CD4-positive, alpha-beta memory T cell (primary cell): ENCODE measurements at regions of chr2 and their contacts with region 1.

Region 1: DNA sequence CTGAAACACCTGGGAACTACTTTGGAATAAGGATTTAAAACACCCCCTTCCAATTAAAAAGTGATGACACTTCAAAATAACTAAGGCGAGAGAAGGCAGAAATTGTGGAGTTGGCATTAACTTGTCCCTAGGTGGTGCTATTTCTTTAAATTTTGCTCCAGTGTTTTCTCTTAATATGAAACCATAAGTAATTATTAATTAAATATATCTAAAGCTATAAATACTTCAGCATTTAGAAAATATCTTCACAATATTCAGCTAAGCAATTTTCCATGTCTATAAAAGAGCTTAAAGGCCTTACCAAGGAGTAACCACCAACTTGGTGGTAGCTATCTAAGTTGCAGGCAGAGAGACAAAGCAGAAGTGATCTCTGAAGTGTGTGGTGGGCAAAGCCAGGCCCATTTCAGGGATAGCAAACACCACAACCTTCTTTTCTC is 186.8 kb upstream of the PGAP1 start:
- DNase-seq: peak in 4 of 5 donors; percentile 38 to 49 (median 44)
- H3K4me3 ChIP-seq: no peak overlapping the region
- H3K4me3 Mint-ChIP-seq: no peak overlapping the region
- H3K27ac ChIP-seq: no peak overlapping the region
- H3K27ac Mint-ChIP-seq: peak overlapping the region; percentile 30 to 91 (median 75)
- H3K4me1 ChIP-seq: peaks cover 4% of the 10 kb centered on the region
- H3K4me1 Mint-ChIP-seq: peaks cover 16 to 31% (median 24%) of the 10 kb centered on the region in 4 donors
- H3K27me3 ChIP-seq: no peaks in the 10 kb centered on the region
- H3K27me3 Mint-ChIP-seq: no peaks in the 10 kb centered on the region

Region 2: GRCh38 chr2:196836440-196836839 is 276.9 kb before region 1 on chr2:
- CTCF ChIA-PET with region 1: no interaction called
- POLR2A ChIA-PET with region 1: no interaction called
- intact Hi-C with region 1: no loop called
- DNase-seq: no peak
- H3K4me3 ChIP-seq: no peak overlapping the region
- H3K4me3 Mint-ChIP-seq: no peak overlapping the region
- H3K27ac ChIP-seq: no peak overlapping the region
- H3K27ac Mint-ChIP-seq: no peak overlapping the region
- H3K4me1 ChIP-seq: no peaks in the 10 kb centered on the region
- H3K4me1 Mint-ChIP-seq: no peaks in the 10 kb centered on the region
- H3K27me3 ChIP-seq: no peaks in the 10 kb centered on the region
- H3K27me3 Mint-ChIP-seq: no peaks in the 10 kb centered on the region

Region 3: DNA sequence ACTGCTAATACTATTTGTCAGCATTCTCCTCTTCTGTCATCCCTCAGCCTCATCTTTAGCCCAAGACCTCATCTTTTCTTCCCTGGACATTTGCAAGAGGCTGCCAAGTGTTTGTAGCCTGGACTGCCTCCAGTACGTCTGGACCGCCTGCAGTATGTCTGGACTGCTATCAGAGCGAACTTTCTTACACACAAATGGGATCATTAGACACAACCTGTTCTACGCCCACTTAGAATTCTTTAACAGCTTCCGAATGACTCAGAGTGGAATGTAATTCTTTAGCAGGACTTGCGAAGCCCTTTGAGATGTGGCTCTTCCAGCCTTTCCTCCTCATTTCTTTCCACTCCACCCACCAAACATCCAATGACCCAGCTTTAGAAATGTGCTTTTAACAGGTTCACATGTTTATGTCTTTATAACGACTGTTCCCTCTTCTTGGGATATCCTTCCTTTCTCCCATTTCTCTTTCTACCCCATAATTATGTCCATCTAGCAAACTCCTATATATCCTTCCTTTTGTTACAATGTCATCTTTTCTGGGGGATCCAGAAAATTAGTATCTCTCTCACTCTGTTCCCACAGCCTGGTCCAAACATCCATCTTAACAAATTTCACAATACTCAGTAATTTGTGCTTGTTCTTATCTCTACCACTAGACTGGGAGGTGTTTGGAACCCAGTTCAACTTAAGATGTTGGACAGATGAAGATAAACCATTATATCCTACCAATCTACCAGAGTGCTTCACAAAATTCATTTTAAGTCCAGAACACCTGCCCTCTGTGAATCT is 15.5 kb before region 1 on chr2:
- CTCF ChIA-PET with region 1: interaction called, 13 read pairs
- POLR2A ChIA-PET with region 1: interaction called, 4 read pairs
- intact Hi-C with region 1: no loop called
- DNase-seq: no peak
- H3K4me3 ChIP-seq: no peak overlapping the region
- H3K4me3 Mint-ChIP-seq: no peak overlapping the region
- H3K27ac ChIP-seq: no peak overlapping the region
- H3K27ac Mint-ChIP-seq: peak overlapping the region in 6 of 7 donors; percentile 3 to 83 (median 41)
- H3K4me1 ChIP-seq: no peaks in the 10 kb centered on the region
- H3K4me1 Mint-ChIP-seq: peaks cover 20 to 30% (median 22%) of the 10 kb centered on the region in 4 donors
- H3K27me3 ChIP-seq: no peaks in the 10 kb centered on the region
- H3K27me3 Mint-ChIP-seq: no peaks in the 10 kb centered on the region

Region 4: DNA sequence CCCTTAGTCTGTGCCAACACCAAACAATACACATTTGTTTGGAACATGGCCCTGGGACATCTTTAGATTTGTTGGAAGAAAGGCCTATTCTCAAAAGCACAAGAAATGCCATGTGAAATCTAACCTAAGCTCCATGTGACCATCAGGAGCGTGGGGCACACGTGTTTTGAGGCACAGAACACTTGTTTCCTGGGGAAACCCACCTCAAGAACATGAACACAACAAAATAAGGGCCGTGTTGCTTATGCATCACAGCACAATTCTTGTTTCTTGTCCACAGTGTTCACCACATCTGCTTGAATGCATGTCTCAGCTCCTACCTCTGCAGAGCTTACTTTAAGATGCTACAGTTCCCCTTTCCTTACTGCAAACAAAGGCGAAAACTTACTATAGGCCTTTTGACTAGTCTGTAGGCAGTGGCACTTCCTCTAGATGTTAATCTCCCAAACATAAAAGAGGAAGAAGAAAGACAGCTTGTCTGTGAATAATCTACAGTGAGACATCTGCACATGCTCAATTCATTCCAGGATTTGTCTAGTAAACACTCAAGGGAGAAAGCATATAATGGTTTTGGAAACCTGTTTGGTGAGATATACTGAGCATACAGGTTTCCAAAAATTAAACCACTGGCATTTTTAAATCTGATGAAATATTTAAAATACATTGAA is 32.3 kb after region 1 on chr2:
- CTCF ChIA-PET with region 1: interaction called, 27 read pairs
- POLR2A ChIA-PET with region 1: no interaction called
- intact Hi-C with region 1: loop called (anchors 5 kb)
- DNase-seq: peak; percentile 43 to 63 (median 50)
- H3K4me3 ChIP-seq: no peak overlapping the region
- H3K4me3 Mint-ChIP-seq: peak overlapping the region in 7 of 8 donors; percentile 14 to 84 (median 47)
- H3K27ac ChIP-seq: peak overlapping the region; percentile 42
- H3K27ac Mint-ChIP-seq: peak overlapping the region; percentile 72 to 95 (median 84)
- H3K4me1 ChIP-seq: peaks cover 89% of the 10 kb centered on the region
- H3K4me1 Mint-ChIP-seq: peaks cover 54 to 88% (median 69%) of the 10 kb centered on the region in 4 donors
- H3K27me3 ChIP-seq: no peaks in the 10 kb centered on the region
- H3K27me3 Mint-ChIP-seq: no peaks in the 10 kb centered on the region

Region 5: GRCh38 chr2:197179744-197180498 is 66.6 kb after region 1 on chr2:
- CTCF ChIA-PET with region 1: interaction called, 26 read pairs
- POLR2A ChIA-PET with region 1: no interaction called
- intact Hi-C with region 1: no loop called
- DNase-seq: no peak
- H3K4me3 ChIP-seq: no peak overlapping the region
- H3K4me3 Mint-ChIP-seq: peak overlapping the region in 1 of 8 donors; percentile 21
- H3K27ac ChIP-seq: no peak overlapping the region
- H3K27ac Mint-ChIP-seq: peak overlapping the region in 5 of 7 donors; percentile 3 to 60 (median 24)
- H3K4me1 ChIP-seq: peaks cover 76% of the 10 kb centered on the region
- H3K4me1 Mint-ChIP-seq: peaks cover 55 to 79% (median 65%) of the 10 kb centered on the region in 4 donors
- H3K27me3 ChIP-seq: no peaks in the 10 kb centered on the region
- H3K27me3 Mint-ChIP-seq: no peaks in the 10 kb centered on the region

Region 6: DNA sequence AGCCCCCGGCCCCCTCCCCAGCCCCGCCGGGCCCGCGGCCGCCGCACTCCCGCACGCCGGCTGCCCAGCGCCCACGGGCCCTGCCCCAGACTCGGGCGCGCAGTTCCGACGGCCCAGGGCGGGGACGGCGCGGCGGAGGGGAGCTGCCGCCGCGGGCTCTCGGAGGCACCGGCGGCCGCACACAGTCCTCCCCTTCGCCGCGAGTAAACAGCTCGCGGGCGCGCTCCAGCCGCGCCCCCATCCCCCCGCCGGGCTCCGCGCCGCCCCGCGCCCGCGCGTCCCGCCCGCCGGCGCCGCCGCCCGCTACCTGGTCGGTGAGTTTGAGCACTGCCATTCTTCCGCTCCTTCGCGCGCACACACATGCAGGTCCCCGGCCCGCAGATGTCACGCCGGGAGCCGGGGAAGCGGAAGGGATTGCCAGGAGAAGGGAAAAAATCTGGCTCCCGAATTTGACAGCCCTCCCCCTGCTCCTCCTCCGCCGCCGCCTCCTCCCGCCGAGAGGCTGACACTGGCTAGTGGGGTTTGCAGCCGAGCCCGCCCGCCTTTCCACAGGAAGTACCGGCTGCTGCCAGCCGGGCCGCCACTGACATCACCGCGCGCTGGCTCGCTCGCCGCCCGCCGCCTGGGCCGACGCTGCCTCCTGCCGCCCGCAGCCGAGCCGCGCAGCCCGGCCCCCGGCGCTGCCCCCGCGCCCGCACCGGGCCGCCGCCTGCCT is 197.1 kb after region 1 on chr2 and contains the start of gene ANKRD44:
- CTCF ChIA-PET with region 1: interaction called, 68 read pairs
- POLR2A ChIA-PET with region 1: interaction called, 13 read pairs
- intact Hi-C with region 1: loop called (anchors 1 kb)
- DNase-seq: peak; percentile 91 to 94 (median 94)
- H3K4me3 ChIP-seq: peak within 1 kb of the TSS; percentile 65 to 87
- H3K4me3 Mint-ChIP-seq: peak within 1 kb of the TSS; percentile 91 to 97 (median 95)
- H3K27ac ChIP-seq: peak within 1 kb of the TSS; percentile 93
- H3K27ac Mint-ChIP-seq: peak within 1 kb of the TSS; percentile 94 to 97 (median 96)
- H3K4me1 ChIP-seq: peaks cover 55% of the 10 kb centered on the region
- H3K4me1 Mint-ChIP-seq: peaks cover 46 to 74% (median 56%) of the 10 kb centered on the region in 4 donors
- H3K27me3 ChIP-seq: no peaks in the 10 kb centered on the region
- H3K27me3 Mint-ChIP-seq: no peaks in the 10 kb centered on the region
- total RNA-seq, gene ANKRD44: 229 to 248 TPM

Region 7: GRCh38 chr2:197378494-197379307 is 265.4 kb after region 1 on chr2:
- CTCF ChIA-PET with region 1: interaction called, 46 read pairs
- POLR2A ChIA-PET with region 1: no interaction called
- intact Hi-C with region 1: loop called (anchors 1 kb)
- DNase-seq: peak; percentile 60 to 69 (median 63)
- H3K4me3 ChIP-seq: no peak overlapping the region
- H3K4me3 Mint-ChIP-seq: no peak overlapping the region
- H3K27ac ChIP-seq: no peak overlapping the region
- H3K27ac Mint-ChIP-seq: peak overlapping the region in 2 of 7 donors; percentile 0 to 52
- H3K4me1 ChIP-seq: peaks cover 8% of the 10 kb centered on the region
- H3K4me1 Mint-ChIP-seq: peaks cover 5 to 12% (median 10%) of the 10 kb centered on the region in 4 donors
- H3K27me3 ChIP-seq: no peaks in the 10 kb centered on the region
- H3K27me3 Mint-ChIP-seq: peaks cover 1 to 3% of the 10 kb centered on the region in 2 donors